ENCODE measurements at regions of chr1 and their contacts with region 1.

Region 1: DNA sequence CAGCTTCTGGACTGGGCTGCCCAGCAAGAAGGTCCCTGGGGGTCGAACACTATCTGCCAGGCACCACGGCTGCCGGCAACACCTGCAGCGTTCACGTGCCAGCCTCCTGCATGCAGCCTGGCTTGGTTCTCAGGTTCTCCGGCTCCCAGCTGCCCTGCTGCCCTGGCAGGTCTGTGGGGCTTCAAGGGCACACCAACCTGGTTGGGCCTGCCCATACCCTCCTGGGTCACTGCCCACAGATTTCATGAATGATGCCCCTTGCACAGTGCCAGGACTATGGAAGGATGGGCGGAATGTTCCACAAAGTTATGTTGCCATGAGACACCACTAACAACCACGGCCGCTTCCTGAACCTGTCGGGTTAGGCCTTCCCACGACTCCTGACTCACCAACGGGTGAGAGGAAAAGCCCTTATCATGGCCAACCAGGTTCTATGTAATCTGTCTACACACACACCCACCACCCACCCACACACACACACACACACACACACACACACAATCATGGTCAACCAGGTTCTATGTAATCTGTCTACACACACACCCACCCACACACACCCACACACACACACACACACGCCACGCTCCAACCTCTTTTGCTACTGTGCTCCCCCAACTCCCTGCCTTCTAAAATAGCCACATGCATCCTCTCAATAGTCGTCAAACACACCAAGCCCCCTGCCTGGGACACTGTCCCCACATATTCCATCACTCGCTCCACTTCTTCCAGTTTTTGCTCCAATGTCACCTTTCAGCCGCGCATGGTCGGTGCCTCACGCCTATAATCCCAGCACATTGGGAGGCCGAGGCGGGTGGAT is 32.2 kb downstream of the HSPG2 start:
- DNase-seq: peak; percentile 66 to 81
- ATAC-seq: peak; percentile 72 to 77 (median 76)
- H3K4me3 ChIP-seq: no peak overlapping the region
- H3K27ac ChIP-seq: peak overlapping the region; percentile 72
- H3K4me1 ChIP-seq: peaks cover 73% of the 10 kb centered on the region
- H3K27me3 ChIP-seq: no peaks in the 10 kb centered on the region
- CTCF ChIP-seq: no peak

Region 2: DNA sequence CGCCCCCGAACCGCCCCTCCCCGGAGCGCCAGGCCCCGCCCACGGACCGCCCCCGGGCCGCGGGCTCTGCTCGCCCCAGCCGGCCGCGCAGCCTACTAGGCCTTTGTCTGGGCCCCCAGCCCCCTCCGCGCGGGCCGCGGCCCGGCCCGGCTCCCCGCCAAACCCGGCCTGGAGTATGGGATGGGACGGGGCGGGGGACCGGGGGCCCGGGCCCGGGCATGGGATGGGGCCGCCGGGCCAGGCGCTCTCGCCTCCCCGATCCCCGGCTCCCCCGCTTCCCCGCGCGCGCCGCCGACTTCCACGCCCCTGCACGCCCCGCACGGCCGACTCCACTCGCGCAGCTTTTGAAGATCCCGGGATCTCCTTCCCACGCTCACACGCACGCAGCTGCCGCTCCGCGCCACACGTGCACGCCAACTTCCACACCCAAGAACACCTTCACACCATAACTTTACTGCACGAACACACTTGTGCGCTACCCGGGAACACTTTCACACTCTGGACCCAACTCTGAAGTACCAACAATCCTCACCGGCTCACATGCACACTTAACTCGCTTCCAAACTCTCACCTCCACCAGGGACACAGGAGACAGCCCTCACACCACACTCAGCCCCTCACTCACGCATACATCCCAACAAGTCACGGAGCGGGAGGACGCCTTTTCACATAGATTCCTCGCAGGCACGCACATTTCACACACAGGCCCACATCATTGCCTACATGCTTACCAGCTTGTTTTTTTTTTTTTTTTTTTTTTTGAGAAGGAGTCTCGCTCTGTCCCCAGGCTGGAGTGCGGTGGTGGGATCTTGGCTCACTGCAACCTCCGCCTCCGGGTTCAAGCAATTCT is 32.7 kb after region 1 on chr1:
- intact Hi-C with region 1: loop called in 1 of 2 experiments (anchors 5 kb)
- DNase-seq: peak; percentile 88 to 91
- ATAC-seq: peak; percentile 69 to 81 (median 74)
- H3K4me3 ChIP-seq: peak overlapping the region; percentile 70
- H3K27ac ChIP-seq: peak overlapping the region; percentile 69
- H3K4me1 ChIP-seq: peaks cover 50% of the 10 kb centered on the region
- H3K27me3 ChIP-seq: no peaks in the 10 kb centered on the region
- CTCF ChIP-seq: no peak

Region 3: DNA sequence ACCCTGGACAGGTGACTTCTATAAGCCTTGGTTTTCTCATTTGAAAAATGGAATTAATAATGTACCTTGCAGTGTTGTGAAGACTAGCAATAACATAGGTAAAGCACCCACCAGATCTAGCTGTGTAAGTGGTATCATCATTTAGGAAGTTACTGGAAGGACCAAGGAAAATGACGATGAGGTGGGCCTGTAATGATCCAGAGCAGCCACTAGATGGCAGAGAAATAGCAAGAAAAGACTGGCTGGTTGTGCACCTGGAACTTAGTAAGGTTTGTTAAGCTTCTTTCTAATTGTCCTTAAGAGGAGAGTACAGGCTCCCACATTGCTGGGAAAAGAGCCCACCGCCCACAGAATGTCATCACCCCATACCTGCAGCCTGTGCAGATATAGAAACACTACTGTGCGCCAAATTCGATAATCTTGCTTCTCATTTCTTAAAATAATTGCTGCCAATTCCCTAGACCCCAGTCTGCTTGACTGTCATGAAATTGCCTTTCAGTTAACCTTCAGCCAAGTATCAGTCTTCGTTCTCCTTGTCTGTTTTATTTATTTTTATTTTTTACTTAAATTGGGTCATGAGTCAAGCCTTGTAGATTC is 200.8 kb after region 1 on chr1:
- intact Hi-C with region 1: no loop called
- DNase-seq: no peak
- ATAC-seq: peak; percentile 59 to 79 (median 74)
- H3K4me3 ChIP-seq: no peak overlapping the region
- H3K27ac ChIP-seq: no peak overlapping the region
- H3K4me1 ChIP-seq: peaks cover 10% of the 10 kb centered on the region
- H3K27me3 ChIP-seq: no peaks in the 10 kb centered on the region
- CTCF ChIP-seq: peak; percentile 84